Activated CD8-positive, alpha-beta T cell treated with anti-CD3 and anti-CD28 coated beads, Interleukin-2, amount 10 ng/mL, durations not matched to agents 7 days and 5 days (primary cell): ENCODE measurements at regions of chr3 and their contacts with region 1.

Region 1: GRCh38 chr3:12782172-12782815 is 14.2 kb upstream of the CAND2 start:
- DNase-seq: no peak
- ATAC-seq: no peak
- H3K4me3 Mint-ChIP-seq: no peak overlapping the region
- H3K27ac Mint-ChIP-seq: no peak overlapping the region
- H3K4me1 Mint-ChIP-seq: no peaks in the 10 kb centered on the region
- H3K27me3 Mint-ChIP-seq: peaks cover 30% of the 10 kb centered on the region

Region 2: DNA sequence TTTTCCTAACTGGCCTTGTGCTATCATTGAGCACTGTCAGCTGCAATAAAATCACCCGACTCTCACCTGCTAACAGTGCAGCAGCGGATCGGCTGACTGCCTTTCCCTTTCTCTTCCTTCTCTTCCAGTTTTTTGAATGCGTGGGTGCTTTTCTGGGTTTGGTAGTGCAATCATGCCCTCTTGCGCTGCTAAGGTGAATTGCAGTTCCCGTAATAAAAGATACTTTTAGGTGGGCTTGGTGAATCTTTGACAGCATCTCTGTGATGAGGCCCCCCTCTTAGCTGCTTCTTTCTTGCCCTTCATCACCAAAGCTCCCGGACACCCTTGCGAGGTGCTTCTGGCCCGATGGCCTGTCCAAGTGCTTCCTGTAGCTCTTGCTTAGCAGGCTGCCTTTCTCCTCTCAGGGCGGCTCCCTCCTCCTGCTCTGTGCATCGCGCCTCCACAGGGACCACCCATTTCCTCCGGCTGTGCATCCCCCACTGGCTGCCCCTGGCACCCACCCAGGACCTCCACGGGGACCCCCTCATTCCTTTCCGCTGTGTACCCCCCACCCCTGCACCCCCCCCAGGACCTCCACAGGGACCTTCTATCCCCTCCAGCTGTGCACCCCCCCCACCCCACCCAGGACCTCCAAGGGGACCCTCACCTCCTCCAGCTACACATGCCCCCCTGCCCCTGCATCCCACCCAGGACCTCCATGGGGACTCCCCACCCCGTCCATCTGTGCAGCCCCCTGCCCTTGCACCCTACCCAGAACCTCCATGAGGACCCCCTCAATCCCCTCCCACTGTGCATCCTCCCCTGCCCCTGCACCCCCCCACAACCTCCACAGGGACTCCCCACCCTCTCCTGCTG is 109.9 kb after region 1 on chr3:
- CTCF ChIA-PET with region 1: interaction called, 17 read pairs
- POLR2A ChIA-PET with region 1: no interaction called
- DNase-seq: peak; percentile 57
- ATAC-seq: peak; percentile 37
- H3K4me3 Mint-ChIP-seq: no peak overlapping the region
- H3K27ac Mint-ChIP-seq: no peak overlapping the region
- H3K4me1 Mint-ChIP-seq: peaks cover 3% of the 10 kb centered on the region
- H3K27me3 Mint-ChIP-seq: peaks cover 27% of the 10 kb centered on the region